Activated naive CD4-positive, alpha-beta T cell treated with anti-CD3 and anti-CD28 coated beads for 36 hours (primary cell): ENCODE measurements at regions of chr16 and their contacts with region 1.

Region 1: DNA sequence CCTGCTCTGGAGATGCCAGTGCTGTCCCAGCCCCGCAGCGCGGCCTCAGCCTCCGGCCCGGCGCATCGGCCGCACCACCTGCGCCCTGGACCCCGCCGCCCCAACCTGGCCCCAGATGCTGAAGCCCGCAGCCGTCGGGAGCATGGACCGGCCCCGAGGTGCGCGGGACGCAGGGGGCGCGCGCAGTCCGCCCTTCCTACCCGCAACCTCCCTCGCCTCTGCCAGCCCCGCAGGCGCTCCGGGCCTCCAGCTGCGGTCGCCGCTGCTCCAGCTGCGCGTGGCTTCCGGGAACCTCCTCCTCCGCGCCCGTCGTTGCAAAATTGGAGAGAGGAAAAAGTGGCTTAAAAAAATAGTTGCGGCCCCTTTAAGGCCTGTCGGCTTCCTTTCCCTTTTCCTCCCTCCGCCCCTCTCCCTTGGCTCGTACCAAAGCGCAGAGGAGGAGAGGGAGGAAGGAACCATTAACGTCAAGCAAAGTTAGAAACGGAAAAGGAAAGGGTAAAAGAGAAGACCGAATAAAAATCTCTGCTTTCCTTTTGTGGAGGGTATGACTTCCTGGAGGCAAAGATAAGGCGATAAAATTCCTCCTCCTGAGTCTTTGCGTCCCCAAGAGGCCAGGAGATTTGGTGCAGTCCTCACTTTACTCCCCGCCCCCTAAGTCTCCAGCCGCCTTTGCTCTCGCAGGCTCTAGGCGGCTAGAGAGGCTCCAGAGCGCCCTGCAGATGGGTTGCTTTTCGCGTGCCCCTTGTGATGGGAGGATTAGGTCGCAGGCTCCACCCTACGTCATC is at the start of gene CDIPT:
- DNase-seq: peak; percentile 96
- H3K4me3 Mint-ChIP-seq: peak within 1 kb of the TSS; percentile 95
- H3K27ac Mint-ChIP-seq: peak within 1 kb of the TSS; percentile 99
- H3K4me1 Mint-ChIP-seq: peaks cover 22% of the 10 kb centered on the region
- H3K27me3 Mint-ChIP-seq: no peaks in the 10 kb centered on the region
- total RNA-seq, gene CDIPT: 29.0 to 31.0 TPM

Region 2: DNA sequence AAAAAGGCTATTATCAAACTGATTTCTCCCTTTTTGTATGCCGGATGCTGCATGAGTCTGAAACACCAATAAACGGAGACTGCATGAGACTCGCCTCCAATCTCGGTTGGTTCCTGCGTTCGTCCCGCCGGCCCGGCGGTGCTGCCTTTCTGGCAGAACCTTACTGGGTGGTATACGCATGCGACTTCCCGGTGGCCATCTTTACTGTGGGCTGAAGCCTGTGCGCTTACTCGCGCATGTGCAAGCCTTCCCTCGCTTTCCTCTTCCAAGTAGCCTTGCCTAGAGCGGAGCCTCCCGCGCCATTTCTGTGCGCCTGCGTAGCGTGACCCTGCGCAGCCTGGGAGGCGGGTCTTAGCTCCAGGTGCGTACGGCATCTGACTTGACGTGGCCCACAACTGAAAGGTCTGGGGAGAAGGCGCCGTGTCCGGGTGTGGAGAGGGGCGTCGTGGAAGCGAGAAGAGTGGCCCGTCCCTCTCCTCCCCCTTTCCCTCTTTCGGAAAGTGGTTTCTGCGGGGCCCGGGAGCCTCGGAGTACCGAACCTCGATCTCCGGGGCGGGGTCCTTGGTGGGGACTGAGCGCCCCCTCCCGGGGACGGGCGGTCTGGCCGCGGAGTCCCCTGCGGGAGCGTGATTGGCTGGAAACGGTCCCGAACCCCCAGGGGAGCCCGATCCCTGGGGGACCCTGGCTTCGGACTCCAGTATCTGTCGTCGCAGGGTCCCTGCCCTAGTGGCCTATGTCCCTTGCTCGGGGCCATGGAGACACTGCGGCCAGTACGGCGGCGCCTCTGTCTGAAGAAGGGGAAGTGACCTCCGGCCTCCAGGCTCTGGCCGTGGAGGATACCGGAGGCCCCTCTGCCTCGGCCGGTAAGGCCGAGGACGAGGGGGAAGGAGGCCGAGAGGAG is 47.0 kb before region 1 on chr16 and contains the start of gene PAGR1:
- CTCF ChIA-PET with region 1: interaction called, 3 read pairs
- intact Hi-C with region 1: loop called (anchors 1 kb)
- DNase-seq: peak; percentile 99
- H3K4me3 Mint-ChIP-seq: peak within 1 kb of the TSS; percentile 93
- H3K27ac Mint-ChIP-seq: peak within 1 kb of the TSS; percentile 96
- H3K4me1 Mint-ChIP-seq: peaks cover 55% of the 10 kb centered on the region
- H3K27me3 Mint-ChIP-seq: no peaks in the 10 kb centered on the region
- total RNA-seq, gene PAGR1: 16.9 to 19.3 TPM

Region 3: DNA sequence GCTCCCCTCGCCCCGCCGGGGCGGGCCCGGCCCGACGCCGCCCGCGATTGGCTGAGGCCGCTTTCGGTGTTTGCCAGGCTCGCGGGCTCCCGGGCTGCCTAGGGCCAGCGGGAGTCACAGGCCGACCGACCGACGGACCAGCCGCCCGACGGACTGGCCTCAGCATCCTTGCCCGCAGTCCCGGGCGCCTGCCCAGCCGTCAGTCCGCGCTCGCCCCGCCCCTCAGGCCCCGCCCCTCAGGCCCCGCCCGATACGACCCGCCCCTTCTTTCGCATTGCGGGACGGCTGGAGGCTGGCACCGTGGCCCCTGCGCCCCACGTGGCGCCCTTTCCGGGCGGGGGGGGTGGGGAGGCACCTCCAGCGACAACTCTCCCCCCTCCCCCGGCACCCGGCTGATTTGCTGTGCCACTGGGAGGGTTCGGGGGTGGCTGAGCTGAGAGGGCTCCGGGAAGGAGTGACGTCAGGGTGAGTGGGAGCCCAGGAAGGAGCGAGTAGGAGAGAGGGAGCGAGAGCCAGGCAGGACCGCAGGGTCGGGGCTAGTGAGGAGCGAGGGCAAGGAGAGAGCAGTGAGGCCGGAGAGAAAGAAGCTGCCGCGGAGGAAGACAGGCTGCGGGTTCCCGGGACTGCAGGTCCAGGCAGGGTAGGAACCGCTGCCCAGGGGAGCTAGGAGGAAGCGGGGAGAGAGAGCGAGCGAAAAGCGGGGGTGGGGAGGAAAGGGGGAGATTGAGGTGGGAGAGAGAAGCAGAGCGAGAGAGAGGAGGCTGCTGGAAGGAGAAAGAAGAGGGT is 37.2 kb after region 1 on chr16 and contains the start of gene ASPHD1:
- CTCF ChIA-PET with region 1: no interaction called
- intact Hi-C with region 1: loop called (anchors 1 kb)
- DNase-seq: peak; percentile 62
- H3K4me3 Mint-ChIP-seq: peak within 1 kb of the TSS; percentile 75
- H3K27ac Mint-ChIP-seq: no peak within 1 kb of the TSS
- H3K4me1 Mint-ChIP-seq: peaks cover 13% of the 10 kb centered on the region
- H3K27me3 Mint-ChIP-seq: peaks cover 22% of the 10 kb centered on the region
- total RNA-seq, gene ASPHD1: 1.3 to 1.7 TPM

Region 4: GRCh38 chr16:29961479-29962343 is 98.6 kb after region 1 on chr16 and contains the start of gene TMEM219:
- CTCF ChIA-PET with region 1: no interaction called
- intact Hi-C with region 1: loop called (anchors 1 kb)
- DNase-seq: peak; percentile 88
- H3K4me3 Mint-ChIP-seq: peak within 1 kb of the TSS; percentile 87
- H3K27ac Mint-ChIP-seq: peak within 1 kb of the TSS; percentile 83
- H3K4me1 Mint-ChIP-seq: peaks cover 20% of the 10 kb centered on the region
- H3K27me3 Mint-ChIP-seq: no peaks in the 10 kb centered on the region
- total RNA-seq, gene TMEM219: 31.9 to 35.5 TPM

Region 5: DNA sequence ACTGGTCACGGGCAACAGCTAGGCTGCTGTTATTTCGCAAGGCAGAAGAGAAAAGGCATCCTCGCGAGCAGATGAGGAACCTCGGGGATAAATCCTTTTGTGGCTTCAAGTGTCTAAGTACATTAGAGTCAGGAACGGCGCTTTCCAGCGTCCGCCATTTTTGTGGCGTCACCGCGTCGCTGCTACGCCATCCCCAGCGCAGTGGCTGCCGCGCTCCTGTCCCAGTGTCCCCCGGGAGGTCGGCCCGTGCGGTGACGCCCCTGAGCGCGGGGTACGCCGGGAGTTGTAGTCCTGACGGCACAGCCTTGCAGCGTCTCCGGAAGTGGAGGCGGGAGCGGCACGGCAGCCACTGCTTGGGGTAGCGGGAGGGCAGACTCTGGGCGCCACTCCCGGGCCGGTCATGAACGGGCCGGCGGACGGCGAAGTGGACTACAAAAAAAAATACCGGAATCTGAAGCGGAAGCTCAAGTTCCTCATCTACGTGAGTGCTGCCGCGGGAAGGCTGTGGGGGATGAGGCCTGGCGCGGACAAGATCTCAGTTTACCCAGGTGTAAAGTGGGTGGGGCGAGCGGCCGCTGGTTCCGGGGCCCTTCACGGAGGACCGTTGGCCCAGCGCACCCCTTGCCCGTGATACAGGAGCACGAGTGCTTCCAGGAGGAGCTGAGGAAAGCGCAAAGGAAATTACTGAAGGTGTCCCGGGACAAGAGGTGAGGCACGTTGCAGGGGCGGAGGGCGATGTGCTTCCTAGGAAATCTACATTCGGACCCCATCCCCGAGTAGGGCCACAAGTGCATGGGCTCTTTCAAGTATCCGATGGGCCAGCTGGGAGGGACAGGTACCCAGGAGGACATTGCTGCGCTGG is 133.1 kb after region 1 on chr16 and contains the start of gene INO80E:
- CTCF ChIA-PET with region 1: no interaction called
- intact Hi-C with region 1: loop called (anchors 1 kb)
- DNase-seq: peak; percentile 100
- H3K4me3 Mint-ChIP-seq: peak within 1 kb of the TSS; percentile 98
- H3K27ac Mint-ChIP-seq: peak within 1 kb of the TSS; percentile 98
- H3K4me1 Mint-ChIP-seq: peaks cover 32% of the 10 kb centered on the region
- H3K27me3 Mint-ChIP-seq: no peaks in the 10 kb centered on the region
- total RNA-seq, gene INO80E: 62.0 to 65.4 TPM

Region 6: GRCh38 chr16:30024451-30024850 is 161.4 kb after region 1 on chr16:
- CTCF ChIA-PET with region 1: interaction called, 4 read pairs
- intact Hi-C with region 1: loop called (anchors 5 kb)
- DNase-seq: no peak
- H3K4me3 Mint-ChIP-seq: no peak overlapping the region
- H3K27ac Mint-ChIP-seq: no peak overlapping the region
- H3K4me1 Mint-ChIP-seq: peaks cover 5% of the 10 kb centered on the region
- H3K27me3 Mint-ChIP-seq: peaks cover 23% of the 10 kb centered on the region

Region 7: DNA sequence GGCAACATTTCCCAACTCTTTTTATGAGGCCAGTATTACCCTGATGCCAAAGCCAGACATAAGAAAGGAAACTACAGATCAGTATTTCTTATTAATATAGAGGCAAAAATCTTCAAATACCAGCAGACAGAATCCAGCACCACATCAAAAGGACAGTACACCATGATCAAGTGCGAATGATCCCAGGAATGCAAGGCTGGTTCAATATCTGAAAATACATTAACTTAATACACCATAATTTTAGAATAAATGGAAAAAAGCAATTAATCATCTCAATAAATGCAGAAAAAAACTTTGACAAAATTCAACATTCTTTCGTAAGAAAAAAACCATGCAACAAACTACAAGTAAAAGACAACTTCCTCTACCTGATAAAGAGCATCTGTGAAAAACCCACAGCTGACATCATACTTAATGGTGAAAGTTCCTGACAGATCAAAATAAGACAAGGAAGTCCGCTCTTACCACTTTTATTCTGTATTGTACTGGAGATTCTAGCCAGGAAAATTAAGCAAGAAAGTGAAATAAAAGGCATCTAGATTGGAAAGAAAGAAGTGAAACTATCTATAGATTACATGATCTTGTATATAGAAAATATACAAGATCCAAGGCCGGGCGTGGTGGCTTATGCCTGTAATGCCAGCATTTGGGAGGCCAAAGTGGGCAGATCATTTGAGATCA is 286.3 kb after region 1 on chr16:
- CTCF ChIA-PET with region 1: no interaction called
- intact Hi-C with region 1: no loop called
- DNase-seq: no peak
- H3K4me3 Mint-ChIP-seq: no peak overlapping the region
- H3K27ac Mint-ChIP-seq: no peak overlapping the region
- H3K4me1 Mint-ChIP-seq: no peaks in the 10 kb centered on the region
- H3K27me3 Mint-ChIP-seq: no peaks in the 10 kb centered on the region